ENCODE measurements at regions of chr3 and their contacts with region 1.

Region 1: GRCh38 chr3:40971191-40972168 is 227.8 kb upstream of the CTNNB1 start:
- DNase-seq: peak; percentile 73
- ATAC-seq: peak; percentile 92

Region 2: DNA sequence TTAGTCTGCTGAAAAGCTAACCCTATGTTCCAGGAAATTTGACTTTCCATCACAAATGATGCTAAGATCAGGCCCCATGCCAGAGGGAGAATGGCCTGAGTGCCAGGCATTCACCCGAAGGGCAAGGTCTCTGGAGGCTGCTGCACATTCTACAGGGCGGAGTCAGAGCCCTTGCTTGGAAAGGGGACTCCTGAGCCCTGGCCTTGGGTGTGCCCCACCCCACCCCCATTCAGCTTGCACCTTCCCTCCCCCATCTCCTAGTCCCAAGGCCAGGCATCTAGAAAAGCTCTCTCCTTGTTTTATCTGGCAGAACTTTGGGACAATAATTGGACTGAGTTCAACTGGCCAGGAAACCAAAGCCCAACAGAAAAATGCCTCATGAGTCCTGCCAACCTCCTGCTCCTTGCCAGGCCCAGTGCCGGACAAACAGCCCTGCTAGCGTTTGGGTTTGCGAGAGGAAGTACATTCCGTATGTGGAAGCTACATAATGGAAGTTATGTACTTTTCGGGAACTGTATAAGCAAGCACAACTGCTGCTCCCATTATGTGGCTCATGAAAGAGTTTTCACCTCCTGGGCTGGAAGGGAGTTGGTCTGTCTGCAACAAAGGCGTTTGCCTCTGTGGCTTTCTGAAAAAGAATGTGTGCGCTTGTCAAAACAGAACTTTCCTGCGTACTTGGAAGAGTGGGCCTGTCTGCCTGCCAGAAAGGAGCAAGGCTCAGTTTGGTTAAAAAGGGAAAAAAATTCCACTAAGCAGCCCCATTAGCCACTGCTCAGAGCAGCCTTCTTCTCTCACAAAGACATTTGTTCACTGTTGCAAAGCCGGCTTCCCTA is 93.6 kb before region 1 on chr3:
- intact Hi-C with region 1: loop called (anchors 5 kb)
- DNase-seq: peak; percentile 78
- ATAC-seq: peak; percentile 87

Region 3: GRCh38 chr3:41158947-41159346 is 187.5 kb after region 1 on chr3:
- intact Hi-C with region 1: no loop called
- DNase-seq: no peak
- ATAC-seq: no peak

Measured in Right ventricle myocardium inferior (tissue), 1 donor.